Psoas muscle (tissue), 8 donors: ENCODE measurements at regions of chr10 and their contacts with region 1.

Region 1: GRCh38 chr10:59234816-59235429 is 58.5 kb downstream of the PHYHIPL start:
- DNase-seq: no peak
- ATAC-seq: no peak
- H3K4me3 ChIP-seq: no peak overlapping the region
- H3K27ac ChIP-seq: no peak overlapping the region
- H3K4me1 ChIP-seq: no peaks in the 10 kb centered on the region
- H3K27me3 ChIP-seq: no peaks in the 10 kb centered on the region
- CTCF ChIP-seq: peak; percentile 52

Region 2: GRCh38 chr10:58781873-58782488 is 452.9 kb before region 1 on chr10:
- intact Hi-C with region 1: loop called in 1 of 2 experiments (anchors 5 kb)
- DNase-seq: no peak
- ATAC-seq: peak in 3 of 4 donors; percentile 41 to 80 (median 66)
- H3K4me3 ChIP-seq: no peak overlapping the region
- H3K27ac ChIP-seq: peak overlapping the region; percentile 42
- H3K4me1 ChIP-seq: peaks cover 3% of the 10 kb centered on the region
- H3K27me3 ChIP-seq: no peaks in the 10 kb centered on the region
- CTCF ChIP-seq: peak; percentile 63

Region 3: GRCh38 chr10:58952747-58953466 is 282.0 kb before region 1 on chr10:
- intact Hi-C with region 1: loop called in 1 of 2 experiments (anchors 5 kb)
- DNase-seq: no peak
- ATAC-seq: peak; percentile 59 to 79 (median 72)
- H3K4me3 ChIP-seq: no peak overlapping the region
- H3K27ac ChIP-seq: peak overlapping the region; percentile 16
- H3K4me1 ChIP-seq: no peaks in the 10 kb centered on the region
- H3K27me3 ChIP-seq: no peaks in the 10 kb centered on the region
- CTCF ChIP-seq: peak; percentile 83

Region 4: DNA sequence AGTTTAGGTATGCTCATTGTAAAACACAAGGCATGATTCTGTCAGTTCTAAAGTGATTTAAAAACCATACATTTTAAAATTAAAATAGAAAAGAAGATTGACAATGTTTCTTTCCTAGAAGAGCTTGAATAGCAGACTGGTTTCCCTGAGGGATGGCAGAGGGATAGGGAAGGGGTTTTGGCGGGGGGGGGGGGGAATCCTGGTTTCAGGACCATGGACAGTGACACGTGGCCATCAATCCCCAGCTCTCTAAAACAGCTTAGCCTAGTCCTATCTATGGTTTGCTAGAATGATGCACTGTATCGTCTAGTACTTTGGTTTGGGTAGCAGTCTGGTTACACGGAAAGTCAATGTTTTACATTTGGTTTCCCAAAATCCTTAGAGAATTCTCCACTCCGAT is 30.2 kb after region 1 on chr10:
- intact Hi-C with region 1: no loop called
- DNase-seq: no peak
- ATAC-seq: peak in 1 of 4 donors; percentile 50
- H3K4me3 ChIP-seq: no peak overlapping the region
- H3K27ac ChIP-seq: no peak overlapping the region
- H3K4me1 ChIP-seq: peaks cover 16% of the 10 kb centered on the region
- H3K27me3 ChIP-seq: no peaks in the 10 kb centered on the region
- CTCF ChIP-seq: no peak

Region 5: GRCh38 chr10:59580026-59580863 is 345.3 kb after region 1 on chr10:
- intact Hi-C with region 1: loop called in 1 of 2 experiments (anchors 5 kb)
- DNase-seq: no peak
- ATAC-seq: no peak
- H3K4me3 ChIP-seq: no peak overlapping the region
- H3K27ac ChIP-seq: no peak overlapping the region
- H3K4me1 ChIP-seq: no peaks in the 10 kb centered on the region
- H3K27me3 ChIP-seq: no peaks in the 10 kb centered on the region
- CTCF ChIP-seq: peak; percentile 56

Region 6: DNA sequence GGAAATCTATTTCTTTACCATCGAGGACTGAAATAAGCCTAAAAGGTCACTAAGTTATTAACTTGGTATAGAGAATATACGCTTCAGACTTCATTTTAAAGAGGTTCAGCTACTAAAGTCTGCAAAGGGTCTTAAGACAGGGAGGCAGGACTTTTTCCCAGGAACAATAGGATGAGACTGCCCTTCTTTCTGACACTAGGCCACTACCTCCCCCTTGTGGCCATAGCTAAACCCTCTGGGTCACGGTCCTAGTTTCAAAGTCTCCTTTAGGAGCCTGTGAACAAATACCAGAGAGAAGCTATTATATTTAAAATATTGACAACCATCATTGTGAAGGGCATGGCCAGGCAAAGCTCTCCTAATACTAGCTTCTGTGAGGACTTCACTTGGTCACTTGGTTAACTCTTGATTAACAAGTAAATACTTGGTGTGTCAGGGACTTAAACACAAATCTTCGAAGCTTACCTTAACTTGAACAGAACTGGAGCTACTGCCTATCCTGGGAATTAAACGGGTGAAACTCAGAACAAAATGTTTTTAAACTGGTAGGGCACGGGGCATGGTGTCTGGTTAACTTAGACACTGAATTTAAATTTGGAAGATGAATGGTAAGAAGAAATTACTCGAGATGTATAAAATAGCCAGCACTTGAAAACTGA is 595.8 kb after region 1 on chr10:
- intact Hi-C with region 1: loop called in 1 of 2 experiments (anchors 10 kb)
- DNase-seq: peak in 1 of 2 donors; percentile 29
- ATAC-seq: peak; percentile 39 to 76 (median 62)
- H3K4me3 ChIP-seq: no peak overlapping the region
- H3K27ac ChIP-seq: no peak overlapping the region
- H3K4me1 ChIP-seq: peaks cover 38% of the 10 kb centered on the region
- H3K27me3 ChIP-seq: no peaks in the 10 kb centered on the region
- CTCF ChIP-seq: peak; percentile 80

Region 7: GRCh38 chr10:60032723-60033122 is 797.8 kb after region 1 on chr10:
- intact Hi-C with region 1: loop called in 1 of 2 experiments (anchors 10 kb)
- DNase-seq: peak; percentile 24 to 58
- ATAC-seq: peak; percentile 89 to 94 (median 90)
- H3K4me3 ChIP-seq: no peak overlapping the region
- H3K27ac ChIP-seq: peak overlapping the region; percentile 88
- H3K4me1 ChIP-seq: peaks cover 25% of the 10 kb centered on the region
- H3K27me3 ChIP-seq: no peaks in the 10 kb centered on the region
- CTCF ChIP-seq: peak; percentile 63